Heart left ventricle (tissue), 16 donors: ENCODE measurements at regions of chr6 and their contacts with region 1.

Region 1: GRCh38 chr6:161486361-161487216 is 212.7 kb upstream of the AGPAT4 start:
- DNase-seq: peak in 4 of 5 donors; percentile 27 to 62 (median 46)
- ATAC-seq: peak; percentile 65 to 94 (median 86)
- H3K4me3 ChIP-seq: no peak overlapping the region
- H3K27ac ChIP-seq: peak overlapping the region in 4 of 12 donors; percentile 13 to 35 (median 16)
- H3K4me1 ChIP-seq: peaks cover 0 to 21% (median 1%) of the 10 kb centered on the region in 12 donors
- H3K27me3 ChIP-seq: no peaks in the 10 kb centered on the region
- CTCF ChIP-seq: no peak
- POLR2A ChIP-seq: no peak

Region 2: DNA sequence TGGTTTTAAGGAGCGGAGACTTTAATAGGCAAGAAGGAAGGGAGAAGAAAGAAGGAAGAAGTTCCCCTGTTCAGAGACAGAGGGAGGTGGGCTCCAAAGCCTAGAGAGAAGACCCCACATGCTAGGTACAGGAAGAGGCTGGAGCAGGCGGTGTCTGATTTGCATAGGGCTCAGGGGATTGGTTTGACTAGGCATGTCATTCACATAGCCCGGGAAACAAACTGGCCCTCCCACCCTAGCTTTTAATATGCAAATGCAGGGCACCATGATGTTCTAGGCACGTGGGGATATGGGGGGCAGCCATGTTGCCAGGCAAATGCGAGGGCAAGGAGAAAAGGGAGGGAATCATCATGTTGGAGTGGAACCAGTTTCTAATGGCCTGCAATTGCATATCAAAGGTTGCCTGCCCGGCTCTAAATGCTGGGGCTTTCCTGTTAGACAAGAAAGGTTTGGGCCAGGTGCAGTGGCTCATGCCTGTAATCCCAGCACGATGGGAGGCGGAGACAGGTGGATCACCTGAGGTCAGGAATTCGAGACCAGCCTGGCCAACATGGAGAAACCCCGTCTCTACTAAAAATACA is 178.4 kb before region 1 on chr6:
- intact Hi-C with region 1: no loop called
- DNase-seq: no peak
- ATAC-seq: no peak
- H3K4me3 ChIP-seq: no peak overlapping the region
- H3K27ac ChIP-seq: no peak overlapping the region
- H3K4me1 ChIP-seq: no peaks in the 10 kb centered on the region
- H3K27me3 ChIP-seq: no peaks in the 10 kb centered on the region
- CTCF ChIP-seq: no peak
- POLR2A ChIP-seq: no peak

Region 3: GRCh38 chr6:161406646-161407045 is 79.9 kb before region 1 on chr6:
- intact Hi-C with region 1: no loop called
- DNase-seq: no peak
- ATAC-seq: no peak
- H3K4me3 ChIP-seq: no peak overlapping the region
- H3K27ac ChIP-seq: no peak overlapping the region
- H3K4me1 ChIP-seq: peaks cover 0 to 7% (median 0%) of the 10 kb centered on the region in 12 donors
- H3K27me3 ChIP-seq: no peaks in the 10 kb centered on the region
- CTCF ChIP-seq: no peak
- POLR2A ChIP-seq: no peak

Region 4: DNA sequence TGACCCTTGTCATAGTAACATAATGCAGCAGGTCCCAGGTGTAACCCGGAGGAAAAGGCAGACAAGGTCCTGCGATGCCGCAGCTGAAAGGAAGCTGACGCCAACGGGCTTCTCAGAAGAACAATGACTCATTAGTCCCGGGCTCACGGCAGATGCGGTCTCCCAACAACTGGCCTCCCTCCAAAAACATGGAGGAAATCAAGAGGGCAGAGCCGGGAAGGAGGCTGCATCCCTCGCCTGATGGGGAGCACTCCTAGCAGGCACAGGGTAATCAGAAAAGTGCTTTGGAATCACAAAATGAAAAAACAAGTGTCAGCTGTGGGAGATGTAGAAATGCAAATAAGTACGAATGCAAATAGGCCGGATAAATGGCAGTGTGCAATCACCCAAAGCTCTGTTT is 47.5 kb before region 1 on chr6:
- intact Hi-C with region 1: loop called in 2 of 10 experiments (anchors 5 kb)
- DNase-seq: peak in 4 of 5 donors; percentile 71 to 81 (median 76)
- ATAC-seq: peak; percentile 40 to 82 (median 68)
- H3K4me3 ChIP-seq: peak overlapping the region in 9 of 12 donors; percentile 22 to 52 (median 33)
- H3K27ac ChIP-seq: peak overlapping the region in 10 of 12 donors; percentile 3 to 72 (median 58)
- H3K4me1 ChIP-seq: peaks cover 0 to 45% (median 17%) of the 10 kb centered on the region in 12 donors
- H3K27me3 ChIP-seq: no peaks in the 10 kb centered on the region
- CTCF ChIP-seq: no peak
- POLR2A ChIP-seq: no peak

Region 5: GRCh38 chr6:161444464-161444863 is 42.1 kb before region 1 on chr6:
- intact Hi-C with region 1: loop called in 3 of 10 experiments (anchors 5 kb)
- DNase-seq: peak in 1 of 5 donors; percentile 37
- ATAC-seq: peak in 3 of 4 donors; percentile 28 to 47 (median 44)
- H3K4me3 ChIP-seq: no peak overlapping the region
- H3K27ac ChIP-seq: peak overlapping the region in 4 of 12 donors; percentile 6 to 63 (median 44)
- H3K4me1 ChIP-seq: peaks cover 0 to 14% (median 4%) of the 10 kb centered on the region in 12 donors
- H3K27me3 ChIP-seq: no peaks in the 10 kb centered on the region
- CTCF ChIP-seq: peak in 2 of 12 donors; percentile 12 to 38
- POLR2A ChIP-seq: no peak